B cell (primary cell): ENCODE measurements at regions of chr14 and their contacts with region 1.

Region 1: GRCh38 chr14:106024983-106025604 is 498.7 kb downstream of the TMEM121 start:
- DNase-seq: no peak
- ATAC-seq: no peak
- H3K4me3 ChIP-seq: no peak overlapping the region
- H3K4me3 Mint-ChIP-seq: no peak overlapping the region
- H3K27ac ChIP-seq: no peak overlapping the region
- H3K27ac Mint-ChIP-seq: no peak overlapping the region
- H3K4me1 ChIP-seq: no peaks in the 10 kb centered on the region
- H3K4me1 Mint-ChIP-seq: no peaks in the 10 kb centered on the region
- H3K27me3 ChIP-seq: no peaks in the 10 kb centered on the region
- H3K27me3 Mint-ChIP-seq: no peaks in the 10 kb centered on the region
- CTCF ChIP-seq: no peak

Region 2: GRCh38 chr14:106051796-106052195 is 26.7 kb after region 1 on chr14:
- CTCF ChIA-PET with region 1: no interaction called
- POLR2A ChIA-PET with region 1: no interaction called
- intact Hi-C with region 1: loop called (anchors 2 kb)
- DNase-seq: no peak
- ATAC-seq: no peak
- H3K4me3 ChIP-seq: no peak overlapping the region
- H3K4me3 Mint-ChIP-seq: no peak overlapping the region
- H3K27ac ChIP-seq: no peak overlapping the region
- H3K27ac Mint-ChIP-seq: no peak overlapping the region
- H3K4me1 ChIP-seq: peaks cover 0 to 10% of the 10 kb centered on the region in 2 donors
- H3K4me1 Mint-ChIP-seq: peaks cover 5% of the 10 kb centered on the region
- H3K27me3 ChIP-seq: peaks cover 0 to 3% (median 0%) of the 10 kb centered on the region in 4 experiments
- H3K27me3 Mint-ChIP-seq: peaks cover 5% of the 10 kb centered on the region
- CTCF ChIP-seq: no peak